Activated naive CD4-positive, alpha-beta T cell treated with anti-CD3 and anti-CD28 coated beads for 36 hours (primary cell): ENCODE measurements at regions of chr2 and their contacts with region 1.

Region 1: GRCh38 chr2:23460228-23460627 is 75.2 kb downstream of the KLHL29 start:
- DNase-seq: no peak
- H3K4me3 Mint-ChIP-seq: no peak overlapping the region
- H3K27ac Mint-ChIP-seq: no peak overlapping the region
- H3K4me1 Mint-ChIP-seq: no peaks in the 10 kb centered on the region
- H3K27me3 Mint-ChIP-seq: peaks cover 2% of the 10 kb centered on the region

Region 2: GRCh38 chr2:23260621-23261020 is 199.6 kb before region 1 on chr2:
- CTCF ChIA-PET with region 1: no interaction called
- intact Hi-C with region 1: no loop called
- DNase-seq: no peak
- H3K4me3 Mint-ChIP-seq: no peak overlapping the region
- H3K27ac Mint-ChIP-seq: no peak overlapping the region
- H3K4me1 Mint-ChIP-seq: no peaks in the 10 kb centered on the region
- H3K27me3 Mint-ChIP-seq: no peaks in the 10 kb centered on the region

Region 3: GRCh38 chr2:23366720-23367119 is 93.5 kb before region 1 on chr2:
- CTCF ChIA-PET with region 1: no interaction called
- intact Hi-C with region 1: loop called (anchors 5 kb)
- DNase-seq: no peak
- H3K4me3 Mint-ChIP-seq: no peak overlapping the region
- H3K27ac Mint-ChIP-seq: no peak overlapping the region
- H3K4me1 Mint-ChIP-seq: peaks cover 2% of the 10 kb centered on the region
- H3K27me3 Mint-ChIP-seq: peaks cover 20% of the 10 kb centered on the region